ENCODE measurements at regions of chr2 and their contacts with region 1.

Region 1: DNA sequence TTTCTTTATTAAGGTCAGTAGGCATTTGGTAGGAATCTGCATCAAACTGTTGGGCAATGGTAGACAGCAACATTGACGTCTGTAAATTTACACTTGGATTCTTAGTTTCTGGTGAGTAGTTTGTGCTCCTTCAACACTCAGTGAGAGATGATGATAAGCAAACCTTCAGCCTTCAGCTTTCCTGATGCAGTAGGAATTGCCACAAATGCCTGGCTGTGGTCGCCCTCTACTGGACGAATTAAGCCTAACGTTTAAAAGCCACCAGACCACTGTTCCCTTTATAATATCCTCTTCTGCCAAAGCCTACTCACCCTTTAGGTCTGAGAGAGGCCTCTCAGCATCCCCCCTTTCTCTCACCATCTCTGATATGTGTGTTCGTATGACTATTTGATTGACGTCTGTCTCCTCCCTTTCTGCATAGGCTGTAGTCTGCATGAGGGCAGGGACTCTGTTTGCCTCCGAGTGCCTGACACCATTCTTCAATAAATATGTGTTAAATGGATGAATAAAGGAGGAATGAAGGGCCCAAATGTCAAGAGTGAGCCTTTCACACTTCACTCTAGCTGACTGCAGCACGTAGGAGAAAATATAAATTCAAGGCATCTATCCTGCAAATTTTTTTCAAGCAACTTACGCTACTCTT is 47.0 kb upstream of the PLEKHM3 start:
- DNase-seq: peak; percentile 43 to 55 (median 47)
- H3K4me3 ChIP-seq: no peak overlapping the region
- H3K4me3 Mint-ChIP-seq: no peak overlapping the region
- H3K27ac ChIP-seq: no peak overlapping the region
- H3K27ac Mint-ChIP-seq: no peak overlapping the region
- H3K4me1 ChIP-seq: no peaks in the 10 kb centered on the region
- H3K4me1 Mint-ChIP-seq: no peaks in the 10 kb centered on the region
- H3K27me3 ChIP-seq: peaks cover 4% of the 10 kb centered on the region
- H3K27me3 Mint-ChIP-seq: peaks cover 7 to 16% of the 10 kb centered on the region in 2 donors

Region 2: GRCh38 chr2:206981739-206982340 is 1090.5 kb before region 1 on chr2:
- CTCF ChIA-PET with region 1: no interaction called
- POLR2A ChIA-PET with region 1: no interaction called
- intact Hi-C with region 1: loop called (anchors 10 kb)
- DNase-seq: peak; percentile 33 to 49 (median 39)
- H3K4me3 ChIP-seq: no peak overlapping the region
- H3K4me3 Mint-ChIP-seq: no peak overlapping the region
- H3K27ac ChIP-seq: no peak overlapping the region
- H3K27ac Mint-ChIP-seq: no peak overlapping the region
- H3K4me1 ChIP-seq: no peaks in the 10 kb centered on the region
- H3K4me1 Mint-ChIP-seq: peaks cover 0 to 6% (median 2%) of the 10 kb centered on the region in 4 donors
- H3K27me3 ChIP-seq: no peaks in the 10 kb centered on the region
- H3K27me3 Mint-ChIP-seq: peaks cover 0 to 2% of the 10 kb centered on the region in 2 donors

Region 3: GRCh38 chr2:207506426-207506825 is 565.9 kb before region 1 on chr2:
- CTCF ChIA-PET with region 1: no interaction called
- POLR2A ChIA-PET with region 1: no interaction called
- intact Hi-C with region 1: loop called (anchors 1 kb)
- DNase-seq: no peak
- H3K4me3 ChIP-seq: no peak overlapping the region
- H3K4me3 Mint-ChIP-seq: peak overlapping the region in 6 of 8 donors; percentile 17 to 69 (median 58)
- H3K27ac ChIP-seq: no peak overlapping the region
- H3K27ac Mint-ChIP-seq: peak overlapping the region in 4 of 7 donors; percentile 8 to 86 (median 48)
- H3K4me1 ChIP-seq: peaks cover 21% of the 10 kb centered on the region
- H3K4me1 Mint-ChIP-seq: peaks cover 19 to 41% (median 28%) of the 10 kb centered on the region in 4 donors
- H3K27me3 ChIP-seq: no peaks in the 10 kb centered on the region
- H3K27me3 Mint-ChIP-seq: no peaks in the 10 kb centered on the region

Region 4: DNA sequence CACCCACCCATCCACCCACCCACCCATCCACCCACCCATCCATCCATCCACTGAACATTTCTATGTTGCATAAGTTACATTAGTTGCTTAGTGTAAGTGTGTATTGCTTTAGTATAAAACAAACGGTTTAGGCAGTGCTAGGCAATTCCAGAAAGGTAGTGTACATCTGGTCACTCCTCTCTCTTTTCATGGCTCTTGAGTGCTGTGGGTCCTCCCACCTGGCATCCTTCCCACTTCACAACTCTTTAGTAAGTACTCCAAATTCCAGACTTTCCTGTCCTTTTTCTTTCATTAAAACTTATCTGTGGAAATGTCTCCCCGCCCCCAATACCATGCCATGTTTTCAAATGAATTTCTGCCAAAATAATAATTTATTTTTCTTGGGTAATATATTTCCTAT is 169.6 kb before region 1 on chr2:
- CTCF ChIA-PET with region 1: no interaction called
- POLR2A ChIA-PET with region 1: no interaction called
- intact Hi-C with region 1: no loop called
- DNase-seq: no peak
- H3K4me3 ChIP-seq: no peak overlapping the region
- H3K4me3 Mint-ChIP-seq: no peak overlapping the region
- H3K27ac ChIP-seq: no peak overlapping the region
- H3K27ac Mint-ChIP-seq: no peak overlapping the region
- H3K4me1 ChIP-seq: no peaks in the 10 kb centered on the region
- H3K4me1 Mint-ChIP-seq: peaks cover 0 to 2% (median 0%) of the 10 kb centered on the region in 4 donors
- H3K27me3 ChIP-seq: no peaks in the 10 kb centered on the region
- H3K27me3 Mint-ChIP-seq: no peaks in the 10 kb centered on the region

Measured in CD4-positive, alpha-beta memory T cell (primary cell).